GM12878 (cell line): ENCODE measurements at regions of chr11 and their contacts with region 1.

Region 1: DNA sequence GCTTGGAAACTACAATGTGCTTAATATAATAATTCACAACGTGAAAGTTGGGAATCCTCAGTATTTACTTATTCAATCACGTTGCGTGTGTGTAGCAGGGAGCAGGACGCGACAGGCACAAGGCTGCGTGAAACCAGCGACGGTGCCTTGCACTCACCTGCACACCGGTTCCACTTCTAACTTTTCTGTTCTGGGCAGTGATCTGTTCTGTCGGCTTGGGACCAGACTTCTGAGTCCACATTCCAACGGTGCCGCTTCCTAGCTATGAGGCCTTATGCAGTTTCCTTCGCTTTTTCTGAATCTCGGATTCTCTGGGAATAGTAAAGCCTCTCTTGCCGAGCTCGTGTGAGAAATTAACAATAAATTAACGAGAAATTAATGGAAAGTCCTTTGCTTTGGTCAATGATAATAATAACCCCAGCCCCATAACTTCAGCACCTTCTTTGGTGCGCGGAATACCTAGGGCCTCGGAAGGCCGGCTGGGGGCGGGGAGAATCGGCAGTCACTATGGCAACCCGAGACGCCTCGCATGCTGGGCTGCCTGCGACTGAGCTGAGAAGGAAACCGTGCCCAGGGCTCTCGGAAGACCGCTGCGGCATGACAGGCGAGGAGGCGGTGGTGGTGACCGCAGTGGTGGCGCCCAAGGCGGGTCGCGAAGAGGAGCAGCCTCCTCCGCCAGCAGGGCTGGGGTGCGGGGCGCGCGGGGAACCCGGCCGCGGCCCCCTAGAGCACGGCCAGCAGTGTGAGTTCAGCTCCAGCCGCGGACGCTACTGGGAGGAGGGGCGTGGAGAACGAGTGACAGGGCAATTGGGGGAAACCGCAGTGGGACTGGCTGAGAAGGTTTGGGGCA is at the start of gene C11orf97:
- DNase-seq: no peak
- ATAC-seq: peak; percentile 91
- H3K4me3 ChIP-seq: no peak within 1 kb of the TSS
- H3K27ac ChIP-seq: no peak within 1 kb of the TSS
- H3K4me1 ChIP-seq: no peaks in the 10 kb centered on the region
- H3K27me3 ChIP-seq: peaks cover 0 to 7% of the 10 kb centered on the region in 2 experiments; a peak in 1 of 4 replicates
- CTCF ChIP-seq: no peak
- EP300 ChIP-seq: no peak
- POLR2A ChIP-seq: no peak
- RAD21 ChIP-seq: no peak
- polyA plus RNA-seq, gene C11orf97: not detected

Region 2: DNA sequence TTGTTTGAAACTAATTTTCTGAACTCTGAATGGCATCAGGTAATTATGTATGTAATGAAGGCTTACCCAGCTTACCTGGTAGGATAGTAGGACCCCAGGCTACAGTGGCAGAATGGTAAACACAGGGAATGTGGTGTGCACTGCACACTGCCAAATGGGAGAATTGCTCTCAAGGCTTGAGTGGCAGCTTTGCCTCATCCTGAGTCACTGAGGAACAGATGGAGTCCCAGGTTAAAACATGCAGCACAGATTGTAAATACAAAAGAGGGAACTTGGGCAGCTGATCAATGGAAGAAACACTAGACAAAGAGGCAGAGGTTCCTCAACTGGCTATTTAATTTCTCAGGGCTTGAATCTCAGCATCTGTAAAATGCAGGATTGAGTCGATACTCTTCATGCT is 135.3 kb before region 1 on chr11:
- CTCF ChIA-PET with region 1: no interaction called
- POLR2A ChIA-PET with region 1: no interaction called
- RAD21 ChIA-PET with region 1: no interaction called
- SMC1A ChIA-PET with region 1: no interaction called
- in situ Hi-C with region 1: no loop called
- intact Hi-C with region 1: no loop called
- DNase-seq: no peak
- ATAC-seq: no peak
- H3K4me3 ChIP-seq: no peak overlapping the region
- H3K27ac ChIP-seq: no peak overlapping the region
- H3K4me1 ChIP-seq: no peaks in the 10 kb centered on the region
- H3K27me3 ChIP-seq: no peaks in the 10 kb centered on the region
- CTCF ChIP-seq: no peak
- EP300 ChIP-seq: no peak
- POLR2A ChIP-seq: no peak
- RAD21 ChIP-seq: no peak

Region 3: DNA sequence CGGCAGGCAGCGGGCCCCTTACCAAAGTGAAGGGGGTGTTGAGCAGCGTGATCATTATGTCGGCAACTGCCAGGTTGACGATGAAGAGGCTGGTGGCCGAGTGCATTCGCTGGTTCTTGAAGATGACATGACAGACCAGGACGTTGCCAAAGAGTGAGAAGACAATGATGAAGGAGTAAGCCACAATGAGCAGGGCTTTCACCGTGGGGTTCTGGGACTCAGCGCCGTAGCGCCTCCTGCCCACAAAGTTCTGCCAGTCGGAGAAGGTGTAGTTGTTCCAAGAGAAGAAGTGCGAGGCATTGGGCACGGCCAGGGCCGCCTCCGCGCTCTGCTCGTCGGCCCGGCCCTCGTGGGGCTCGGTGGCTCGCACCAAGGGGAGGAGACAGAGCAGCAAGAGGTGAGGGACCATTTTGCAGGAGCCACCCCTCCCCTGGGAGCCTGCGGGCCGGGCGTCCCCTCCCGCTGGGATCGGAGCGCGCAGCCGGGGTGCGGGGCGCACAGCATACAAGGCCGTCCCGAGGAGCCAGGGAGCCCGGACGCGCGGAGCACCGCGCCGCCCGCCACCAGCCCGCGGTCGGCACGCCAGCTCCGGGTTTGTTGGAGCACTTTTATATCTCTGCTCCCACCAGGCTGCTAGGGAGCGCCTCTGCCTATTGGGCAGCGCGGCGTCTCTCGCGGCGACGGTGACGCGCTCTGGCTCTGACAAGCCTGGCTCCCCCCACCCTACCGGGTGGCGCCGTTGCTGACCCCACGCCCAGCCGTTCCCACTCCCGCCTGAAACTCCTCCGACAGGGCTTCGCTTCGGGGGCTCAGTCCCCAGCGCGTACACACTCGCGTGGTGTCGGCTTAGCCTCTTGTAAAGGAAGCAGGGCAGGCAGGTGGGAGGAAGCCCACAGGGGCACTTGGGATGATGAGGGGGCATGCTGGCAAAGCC is 111.1 kb before region 1 on chr11 and contains the start of gene GPR83:
- CTCF ChIA-PET with region 1: no interaction called
- POLR2A ChIA-PET with region 1: no interaction called
- RAD21 ChIA-PET with region 1: no interaction called
- SMC1A ChIA-PET with region 1: no interaction called
- in situ Hi-C with region 1: no loop called
- intact Hi-C with region 1: no loop called
- DNase-seq: no peak
- ATAC-seq: peak; percentile 39
- H3K4me3 ChIP-seq: no peak within 1 kb of the TSS
- H3K27ac ChIP-seq: no peak within 1 kb of the TSS
- H3K4me1 ChIP-seq: no peaks in the 10 kb centered on the region
- H3K27me3 ChIP-seq: peaks cover 0 to 8% of the 10 kb centered on the region in 2 experiments; a peak in 3 of 4 replicates
- CTCF ChIP-seq: no peak
- EP300 ChIP-seq: no peak
- POLR2A ChIP-seq: no peak
- RAD21 ChIP-seq: no peak
- polyA plus RNA-seq, gene GPR83: not detected

Region 4: DNA sequence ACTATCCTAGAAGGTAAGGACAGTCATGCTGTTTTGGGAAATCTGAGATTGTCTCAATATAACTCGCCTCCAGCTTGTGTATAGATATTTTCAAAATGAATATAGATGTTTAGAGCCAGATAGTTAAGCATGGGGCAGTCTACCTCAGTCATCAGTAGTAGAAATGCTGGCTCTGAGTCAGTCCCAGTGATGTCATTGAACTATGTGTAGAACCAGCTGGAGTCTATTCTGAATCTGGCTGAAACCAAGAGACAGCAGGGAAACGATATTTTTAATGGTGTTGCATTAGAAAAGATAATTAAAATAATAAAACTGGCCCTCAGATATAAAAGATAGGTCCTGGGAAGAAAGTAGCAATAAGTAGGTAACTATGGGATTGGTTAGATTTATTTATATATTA is 80.9 kb after region 1 on chr11:
- CTCF ChIA-PET with region 1: interaction called, 282 read pairs
- POLR2A ChIA-PET with region 1: interaction called, 3 read pairs
- RAD21 ChIA-PET with region 1: interaction called, 55 read pairs
- SMC1A ChIA-PET with region 1: interaction called, 179 read pairs
- in situ Hi-C with region 1: no loop called
- intact Hi-C with region 1: no loop called
- DNase-seq: no peak
- ATAC-seq: peak; percentile 82
- H3K4me3 ChIP-seq: no peak overlapping the region
- H3K27ac ChIP-seq: no peak overlapping the region
- H3K4me1 ChIP-seq: no peaks in the 10 kb centered on the region
- H3K27me3 ChIP-seq: no peaks in the 10 kb centered on the region
- CTCF ChIP-seq: no peak
- EP300 ChIP-seq: peak in 1 of 2 experiments; percentile 41; a peak in 1 of 4 replicates
- POLR2A ChIP-seq: no peak
- RAD21 ChIP-seq: no peak

Region 5: GRCh38 chr11:94673951-94674491 is 161.9 kb after region 1 on chr11:
- CTCF ChIA-PET with region 1: no interaction called
- POLR2A ChIA-PET with region 1: no interaction called
- RAD21 ChIA-PET with region 1: no interaction called
- SMC1A ChIA-PET with region 1: no interaction called
- in situ Hi-C with region 1: no loop called
- intact Hi-C with region 1: no loop called
- DNase-seq: no peak
- ATAC-seq: no peak
- H3K4me3 ChIP-seq: no peak overlapping the region
- H3K27ac ChIP-seq: no peak overlapping the region
- H3K4me1 ChIP-seq: no peaks in the 10 kb centered on the region
- H3K27me3 ChIP-seq: no peaks in the 10 kb centered on the region; a peak in 1 of 4 replicates
- CTCF ChIP-seq: no peak
- EP300 ChIP-seq: no peak
- POLR2A ChIP-seq: no peak
- RAD21 ChIP-seq: no peak

Region 6: DNA sequence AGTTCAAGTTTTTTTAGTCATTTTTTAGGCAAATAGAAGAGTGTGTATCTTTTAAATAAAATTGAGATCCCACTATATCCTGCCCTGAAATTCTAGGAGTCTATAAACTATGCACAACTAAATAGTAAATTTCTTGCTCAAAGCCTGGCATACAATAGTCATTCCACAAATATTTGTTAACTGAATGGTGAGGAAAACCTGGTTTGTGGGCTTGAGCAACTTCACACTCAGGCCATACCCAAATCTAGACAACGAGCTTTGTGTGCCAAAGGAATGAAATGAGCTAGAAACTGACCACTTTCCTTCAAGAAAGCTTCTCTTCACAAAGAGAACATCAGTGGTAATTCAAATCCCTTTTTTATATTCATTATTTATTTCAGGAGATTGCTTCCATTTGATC is 216.4 kb after region 1 on chr11:
- CTCF ChIA-PET with region 1: no interaction called
- POLR2A ChIA-PET with region 1: no interaction called
- RAD21 ChIA-PET with region 1: no interaction called
- SMC1A ChIA-PET with region 1: no interaction called
- in situ Hi-C with region 1: no loop called
- intact Hi-C with region 1: no loop called
- DNase-seq: no peak
- ATAC-seq: no peak
- H3K4me3 ChIP-seq: no peak overlapping the region
- H3K27ac ChIP-seq: no peak overlapping the region
- H3K4me1 ChIP-seq: no peaks in the 10 kb centered on the region
- H3K27me3 ChIP-seq: peaks cover 0 to 3% of the 10 kb centered on the region in 2 experiments; a peak in 1 of 4 replicates
- CTCF ChIP-seq: no peak
- EP300 ChIP-seq: no peak
- POLR2A ChIP-seq: no peak
- RAD21 ChIP-seq: no peak

Region 7: GRCh38 chr11:94757037-94757735 is 245.0 kb after region 1 on chr11:
- CTCF ChIA-PET with region 1: no interaction called
- POLR2A ChIA-PET with region 1: no interaction called
- RAD21 ChIA-PET with region 1: no interaction called
- SMC1A ChIA-PET with region 1: no interaction called
- in situ Hi-C with region 1: no loop called
- intact Hi-C with region 1: loop called (anchors 10 kb)
- DNase-seq: no peak
- ATAC-seq: no peak; the same call in 2 of the 3 replicates
- H3K4me3 ChIP-seq: no peak overlapping the region
- H3K27ac ChIP-seq: no peak overlapping the region
- H3K4me1 ChIP-seq: no peaks in the 10 kb centered on the region
- H3K27me3 ChIP-seq: peaks cover 0 to 2% of the 10 kb centered on the region in 2 experiments; a peak in 2 of 4 replicates
- CTCF ChIP-seq: no peak
- EP300 ChIP-seq: no peak
- POLR2A ChIP-seq: no peak
- RAD21 ChIP-seq: no peak